Mammary epithelial cell (primary cell): ENCODE measurements at regions of chr10 and their contacts with region 1.

Region 1: GRCh38 chr10:27312854-27313253 is 72.3 kb upstream of the ACBD5 start:
- DNase-seq: no peak
- H3K4me3 ChIP-seq: no peak overlapping the region
- H3K27ac ChIP-seq: no peak overlapping the region
- H3K4me1 ChIP-seq: no peaks in the 10 kb centered on the region
- H3K27me3 ChIP-seq: no peaks in the 10 kb centered on the region
- CTCF ChIP-seq: no peak

Region 2: GRCh38 chr10:26903431-26904217 is 409.2 kb before region 1 on chr10:
- CTCF ChIA-PET with region 1: no interaction called
- dilution Hi-C with region 1: no loop called
- in situ Hi-C with region 1: no loop called
- intact Hi-C with region 1: loop called (anchors 5 kb)
- DNase-seq: no peak
- H3K4me3 ChIP-seq: no peak overlapping the region
- H3K27ac ChIP-seq: no peak overlapping the region
- H3K4me1 ChIP-seq: no peaks in the 10 kb centered on the region
- H3K27me3 ChIP-seq: no peaks in the 10 kb centered on the region
- CTCF ChIP-seq: no peak

Region 3: GRCh38 chr10:27355918-27356573 is 43.2 kb after region 1 on chr10:
- CTCF ChIA-PET with region 1: no interaction called
- dilution Hi-C with region 1: no loop called
- in situ Hi-C with region 1: no loop called
- intact Hi-C with region 1: no loop called
- DNase-seq: no peak
- H3K4me3 ChIP-seq: no peak overlapping the region
- H3K27ac ChIP-seq: no peak overlapping the region
- H3K4me1 ChIP-seq: no peaks in the 10 kb centered on the region
- H3K27me3 ChIP-seq: no peaks in the 10 kb centered on the region
- CTCF ChIP-seq: peak in 1 of 2 donors; percentile 36

Region 4: DNA sequence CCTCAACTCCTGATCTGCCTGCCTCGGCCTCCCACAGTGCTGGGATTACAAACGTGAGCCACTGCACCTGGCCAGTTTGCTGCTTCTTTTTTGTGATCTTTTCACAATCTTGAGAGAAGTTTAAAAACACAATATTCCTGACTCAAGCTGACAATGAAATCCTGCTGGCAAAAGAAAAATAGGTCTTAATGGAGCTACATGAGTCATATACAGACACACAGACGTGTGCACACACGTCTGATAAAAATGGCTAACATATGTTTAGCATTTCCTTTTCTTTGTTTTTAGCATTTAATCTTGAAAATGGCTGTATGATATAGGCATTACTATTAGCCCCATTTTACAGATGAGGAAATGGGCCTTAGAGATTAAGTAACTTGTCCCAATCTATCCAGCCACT is 161.9 kb after region 1 on chr10:
- CTCF ChIA-PET with region 1: no interaction called
- dilution Hi-C with region 1: no loop called
- in situ Hi-C with region 1: no loop called
- intact Hi-C with region 1: no loop called
- DNase-seq: peak; percentile 76
- H3K4me3 ChIP-seq: no peak overlapping the region
- H3K27ac ChIP-seq: peak overlapping the region; percentile 76
- H3K4me1 ChIP-seq: peaks cover 25% of the 10 kb centered on the region
- H3K27me3 ChIP-seq: no peaks in the 10 kb centered on the region
- CTCF ChIP-seq: no peak

Region 5: GRCh38 chr10:27819781-27820531 is 507.1 kb after region 1 on chr10:
- CTCF ChIA-PET with region 1: no interaction called
- dilution Hi-C with region 1: no loop called
- in situ Hi-C with region 1: no loop called
- intact Hi-C with region 1: no loop called
- DNase-seq: peak; percentile 4
- H3K4me3 ChIP-seq: no peak overlapping the region
- H3K27ac ChIP-seq: no peak overlapping the region
- H3K4me1 ChIP-seq: no peaks in the 10 kb centered on the region
- H3K27me3 ChIP-seq: no peaks in the 10 kb centered on the region
- CTCF ChIP-seq: no peak